B cell (primary cell): ENCODE measurements at regions of chr13 and their contacts with region 1.

Region 1: GRCh38 chr13:44917589-44918325 is 71.5 kb downstream of the NUFIP1 start:
- DNase-seq: peak; percentile 99
- ATAC-seq: peak; percentile 74
- H3K4me3 ChIP-seq: peak overlapping the region; percentile 68 to 89 (median 76)
- H3K4me3 Mint-ChIP-seq: no peak overlapping the region
- H3K27ac ChIP-seq: peak overlapping the region; percentile 83 to 88
- H3K27ac Mint-ChIP-seq: no peak overlapping the region
- H3K4me1 ChIP-seq: peaks cover 9% of the 10 kb centered on the region in 2 donors
- H3K4me1 Mint-ChIP-seq: peaks cover 5% of the 10 kb centered on the region
- H3K27me3 ChIP-seq: no peaks in the 10 kb centered on the region
- H3K27me3 Mint-ChIP-seq: no peaks in the 10 kb centered on the region
- CTCF ChIP-seq: peak; percentile 44

Region 2: GRCh38 chr13:44259045-44260027 is 658.4 kb before region 1 on chr13:
- CTCF ChIA-PET with region 1: no interaction called
- POLR2A ChIA-PET with region 1: no interaction called
- intact Hi-C with region 1: loop called (anchors 10 kb)
- DNase-seq: peak; percentile 88
- ATAC-seq: peak; percentile 94
- H3K4me3 ChIP-seq: peak overlapping the region in 4 of 5 experiments; percentile 0 to 37 (median 16)
- H3K4me3 Mint-ChIP-seq: peak overlapping the region; percentile 89
- H3K27ac ChIP-seq: peak overlapping the region; percentile 52 to 67
- H3K27ac Mint-ChIP-seq: peak overlapping the region; percentile 91
- H3K4me1 ChIP-seq: peaks cover 19 to 22% of the 10 kb centered on the region in 2 donors
- H3K4me1 Mint-ChIP-seq: peaks cover 24% of the 10 kb centered on the region
- H3K27me3 ChIP-seq: no peaks in the 10 kb centered on the region
- H3K27me3 Mint-ChIP-seq: peaks cover under 1% of the 10 kb centered on the region
- CTCF ChIP-seq: no peak

Region 3: GRCh38 chr13:44484562-44485138 is 433.1 kb before region 1 on chr13:
- CTCF ChIA-PET with region 1: interaction called, 9 read pairs
- POLR2A ChIA-PET with region 1: no interaction called
- intact Hi-C with region 1: loop called (anchors 1 kb)
- DNase-seq: peak; percentile 48
- ATAC-seq: no peak
- H3K4me3 ChIP-seq: peak overlapping the region in 3 of 5 experiments; percentile 18 to 44 (median 26)
- H3K4me3 Mint-ChIP-seq: peak overlapping the region; percentile 76
- H3K27ac ChIP-seq: peak overlapping the region in 1 of 2 donors; percentile 56
- H3K27ac Mint-ChIP-seq: peak overlapping the region; percentile 63
- H3K4me1 ChIP-seq: peaks cover 10 to 11% of the 10 kb centered on the region in 2 donors
- H3K4me1 Mint-ChIP-seq: peaks cover 30% of the 10 kb centered on the region
- H3K27me3 ChIP-seq: no peaks in the 10 kb centered on the region
- H3K27me3 Mint-ChIP-seq: no peaks in the 10 kb centered on the region
- CTCF ChIP-seq: no peak

Region 4: GRCh38 chr13:44620057-44620456 is 297.7 kb before region 1 on chr13:
- CTCF ChIA-PET with region 1: no interaction called
- POLR2A ChIA-PET with region 1: no interaction called
- intact Hi-C with region 1: no loop called
- DNase-seq: no peak
- ATAC-seq: no peak
- H3K4me3 ChIP-seq: no peak overlapping the region
- H3K4me3 Mint-ChIP-seq: no peak overlapping the region
- H3K27ac ChIP-seq: no peak overlapping the region
- H3K27ac Mint-ChIP-seq: no peak overlapping the region
- H3K4me1 ChIP-seq: no peaks in the 10 kb centered on the region
- H3K4me1 Mint-ChIP-seq: no peaks in the 10 kb centered on the region
- H3K27me3 ChIP-seq: no peaks in the 10 kb centered on the region
- H3K27me3 Mint-ChIP-seq: peaks cover 11% of the 10 kb centered on the region
- CTCF ChIP-seq: no peak

Region 5: GRCh38 chr13:44988973-44989817 is 71.4 kb after region 1 on chr13 and contains the starts of genes GPALPP1 and NUFIP1:
- CTCF ChIA-PET with region 1: no interaction called
- POLR2A ChIA-PET with region 1: interaction called, 4 read pairs
- intact Hi-C with region 1: loop called (anchors 1 kb)
- DNase-seq: peak; percentile 93
- ATAC-seq: peak; percentile 97
- H3K4me3 ChIP-seq: peak within 1 kb of the TSS; percentile 92 to 99 (median 98)
- H3K4me3 Mint-ChIP-seq: peak within 1 kb of the TSS; percentile 100
- H3K27ac ChIP-seq: peak within 1 kb of the TSS; percentile 79 to 89
- H3K27ac Mint-ChIP-seq: peak within 1 kb of the TSS; percentile 98
- H3K4me1 ChIP-seq: peaks cover 13 to 24% of the 10 kb centered on the region in 2 donors
- H3K4me1 Mint-ChIP-seq: peaks cover 43% of the 10 kb centered on the region
- H3K27me3 ChIP-seq: no peaks in the 10 kb centered on the region
- H3K27me3 Mint-ChIP-seq: no peaks in the 10 kb centered on the region
- CTCF ChIP-seq: no peak
- total RNA-seq, gene GPALPP1: 41.8 and 45.6 TPM in 2 replicates
- total RNA-seq, gene NUFIP1: 4.7 and 5.8 TPM in 2 replicates

Region 6: GRCh38 chr13:45206340-45206739 is 288.6 kb after region 1 on chr13:
- CTCF ChIA-PET with region 1: no interaction called
- POLR2A ChIA-PET with region 1: no interaction called
- intact Hi-C with region 1: no loop called
- DNase-seq: no peak
- ATAC-seq: no peak
- H3K4me3 ChIP-seq: no peak overlapping the region
- H3K4me3 Mint-ChIP-seq: no peak overlapping the region
- H3K27ac ChIP-seq: no peak overlapping the region
- H3K27ac Mint-ChIP-seq: no peak overlapping the region
- H3K4me1 ChIP-seq: no peaks in the 10 kb centered on the region
- H3K4me1 Mint-ChIP-seq: peaks cover 7% of the 10 kb centered on the region
- H3K27me3 ChIP-seq: no peaks in the 10 kb centered on the region
- H3K27me3 Mint-ChIP-seq: no peaks in the 10 kb centered on the region
- CTCF ChIP-seq: no peak

Region 7: GRCh38 chr13:45340926-45341750 is 423.4 kb after region 1 on chr13 and contains the start of gene TPT1:
- CTCF ChIA-PET with region 1: no interaction called
- POLR2A ChIA-PET with region 1: no interaction called
- intact Hi-C with region 1: loop called (anchors 1 kb)
- DNase-seq: peak; percentile 100
- ATAC-seq: peak; percentile 89
- H3K4me3 ChIP-seq: peak within 1 kb of the TSS; percentile 78 to 99 (median 95)
- H3K4me3 Mint-ChIP-seq: peak within 1 kb of the TSS; percentile 99
- H3K27ac ChIP-seq: peak within 1 kb of the TSS; percentile 93 to 97
- H3K27ac Mint-ChIP-seq: peak within 1 kb of the TSS; percentile 100
- H3K4me1 ChIP-seq: peaks cover 31 to 35% of the 10 kb centered on the region in 2 donors
- H3K4me1 Mint-ChIP-seq: peaks cover 51% of the 10 kb centered on the region
- H3K27me3 ChIP-seq: no peaks in the 10 kb centered on the region
- H3K27me3 Mint-ChIP-seq: no peaks in the 10 kb centered on the region
- CTCF ChIP-seq: no peak
- total RNA-seq, gene TPT1: 4,599 and 4,871 TPM in 2 replicates

Region 8: DNA sequence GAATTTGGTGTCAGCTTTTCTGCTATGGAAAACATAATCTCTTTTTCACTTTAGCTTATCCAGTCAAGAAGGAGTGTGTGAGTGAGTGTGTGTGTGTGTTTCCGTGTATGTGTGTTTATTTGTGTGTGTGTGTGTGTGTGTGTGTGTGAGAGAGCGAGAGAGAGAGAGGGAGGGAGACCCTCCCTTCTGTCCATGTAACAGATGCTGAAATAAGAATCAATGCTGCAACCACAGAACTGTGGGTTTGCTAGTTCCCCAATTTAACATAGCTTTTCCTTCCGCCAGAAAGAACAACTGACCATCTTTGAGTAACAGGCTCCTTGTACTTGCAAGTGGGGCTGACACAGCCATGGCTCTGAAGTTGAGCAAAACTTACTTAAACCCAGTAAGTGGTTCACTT is 1259.0 kb after region 1 on chr13:
- CTCF ChIA-PET with region 1: no interaction called
- POLR2A ChIA-PET with region 1: no interaction called
- intact Hi-C with region 1: loop called (anchors 5 kb)
- DNase-seq: peak; percentile 83
- ATAC-seq: peak; percentile 61
- H3K4me3 ChIP-seq: peak overlapping the region; percentile 22 to 99 (median 39)
- H3K4me3 Mint-ChIP-seq: peak overlapping the region; percentile 80
- H3K27ac ChIP-seq: peak overlapping the region; percentile 79 to 91
- H3K27ac Mint-ChIP-seq: peak overlapping the region; percentile 90
- H3K4me1 ChIP-seq: peaks cover 68 to 71% of the 10 kb centered on the region in 2 donors
- H3K4me1 Mint-ChIP-seq: peaks cover 73% of the 10 kb centered on the region
- H3K27me3 ChIP-seq: no peaks in the 10 kb centered on the region
- H3K27me3 Mint-ChIP-seq: no peaks in the 10 kb centered on the region
- CTCF ChIP-seq: no peak